Aorta (tissue), 5 donors: ENCODE measurements at regions of chr20 and their contacts with region 1.

Region 1: GRCh38 chr20:10667077-10667401 is 6.8 kb downstream of the JAG1 start:
- DNase-seq: peak; percentile 88 to 94
- ATAC-seq: peak; percentile 58
- H3K4me3 ChIP-seq: peak overlapping the region in 1 of 2 donors; percentile 7
- H3K27ac ChIP-seq: peak overlapping the region; percentile 62 to 97
- H3K4me1 ChIP-seq: peaks cover 2 to 11% of the 10 kb centered on the region in 2 donors
- H3K27me3 ChIP-seq: no peaks in the 10 kb centered on the region

Region 2: DNA sequence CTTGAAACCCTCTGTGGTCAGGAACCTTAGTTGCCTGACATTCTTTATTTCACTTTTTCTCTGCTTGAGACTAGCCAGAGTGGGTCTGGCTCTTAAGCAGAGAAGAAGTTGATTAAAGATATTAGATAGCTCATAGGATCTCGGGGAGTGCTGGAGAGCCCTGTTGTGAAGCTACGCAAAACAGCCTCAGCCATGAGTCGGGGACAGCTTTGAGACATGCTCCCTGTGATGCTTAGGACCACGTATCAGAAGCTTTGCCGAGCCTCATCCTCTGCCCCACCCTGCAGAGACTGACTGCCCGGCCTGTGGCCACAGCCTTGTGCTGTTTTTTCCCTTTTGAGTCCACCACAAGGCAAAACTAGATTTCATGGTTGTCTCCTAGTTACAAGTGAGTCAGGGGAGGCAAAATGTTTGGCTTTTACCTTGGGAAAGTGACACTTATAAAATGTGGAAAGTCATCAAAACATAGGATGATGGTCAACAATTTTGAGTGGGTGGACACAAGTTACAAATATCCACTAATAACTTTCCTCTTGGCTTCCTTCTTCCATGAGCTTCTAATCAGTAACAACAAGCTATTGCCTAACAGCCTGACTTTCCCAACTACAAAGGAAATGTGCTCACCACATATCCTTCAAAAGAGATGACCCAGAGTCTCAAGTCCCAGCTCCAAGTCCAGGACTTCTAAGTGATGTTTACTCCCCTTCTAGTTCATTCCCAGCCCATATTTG is 101.7 kb before region 1 on chr20:
- intact Hi-C with region 1: loop called in 1 of 2 experiments (anchors 2 kb)
- DNase-seq: peak in 1 of 2 donors; percentile 74
- ATAC-seq: peak; percentile 82
- H3K4me3 ChIP-seq: no peak overlapping the region
- H3K27ac ChIP-seq: peak overlapping the region; percentile 87 to 92
- H3K4me1 ChIP-seq: peaks cover 0 to 4% of the 10 kb centered on the region in 2 donors
- H3K27me3 ChIP-seq: no peaks in the 10 kb centered on the region

Region 3: GRCh38 chr20:10603971-10604864 is 62.8 kb before region 1 on chr20:
- intact Hi-C with region 1: loop called (anchors 2 to 5 kb)
- DNase-seq: peak; percentile 77 to 78
- ATAC-seq: peak; percentile 94
- H3K4me3 ChIP-seq: peak overlapping the region in 1 of 2 donors; percentile 54
- H3K27ac ChIP-seq: peak overlapping the region; percentile 100
- H3K4me1 ChIP-seq: peaks cover 3 to 16% of the 10 kb centered on the region in 2 donors
- H3K27me3 ChIP-seq: no peaks in the 10 kb centered on the region

Region 4: GRCh38 chr20:10696650-10697049 is 29.6 kb after region 1 on chr20:
- intact Hi-C with region 1: no loop called
- DNase-seq: no peak
- ATAC-seq: no peak
- H3K4me3 ChIP-seq: no peak overlapping the region
- H3K27ac ChIP-seq: no peak overlapping the region
- H3K4me1 ChIP-seq: peaks cover 0 to 4% of the 10 kb centered on the region in 2 donors
- H3K27me3 ChIP-seq: no peaks in the 10 kb centered on the region